ENCODE measurements at regions of chr14 and their contacts with region 1.

Region 1: GRCh38 chr14:31207755-31208545 is at the start of gene HECTD1:
- DNase-seq: peak; percentile 89
- H3K4me3 Mint-ChIP-seq: peak within 1 kb of the TSS; percentile 92
- H3K27ac Mint-ChIP-seq: peak within 1 kb of the TSS; percentile 100
- H3K4me1 Mint-ChIP-seq: peaks cover 34% of the 10 kb centered on the region
- H3K27me3 Mint-ChIP-seq: no peaks in the 10 kb centered on the region
- total RNA-seq, gene HECTD1: 61.5 to 64.1 TPM

Region 2: GRCh38 chr14:30621940-30622830 is 585.8 kb before region 1 on chr14 and contains the start of gene SCFD1:
- CTCF ChIA-PET with region 1: no interaction called
- intact Hi-C with region 1: loop called (anchors 1 kb)
- DNase-seq: peak; percentile 95
- H3K4me3 Mint-ChIP-seq: peak within 1 kb of the TSS; percentile 96
- H3K27ac Mint-ChIP-seq: peak within 1 kb of the TSS; percentile 94
- H3K4me1 Mint-ChIP-seq: peaks cover 35% of the 10 kb centered on the region
- H3K27me3 Mint-ChIP-seq: no peaks in the 10 kb centered on the region
- total RNA-seq, gene SCFD1: 46.1 to 55.2 TPM

Region 3: GRCh38 chr14:31026395-31027118 is 181.4 kb before region 1 on chr14:
- CTCF ChIA-PET with region 1: no interaction called
- intact Hi-C with region 1: loop called (anchors 1 kb)
- DNase-seq: peak; percentile 92
- H3K4me3 Mint-ChIP-seq: peak overlapping the region; percentile 96
- H3K27ac Mint-ChIP-seq: peak overlapping the region; percentile 96
- H3K4me1 Mint-ChIP-seq: peaks cover 55% of the 10 kb centered on the region
- H3K27me3 Mint-ChIP-seq: no peaks in the 10 kb centered on the region

Region 4: GRCh38 chr14:31270196-31270772 is 62.3 kb after region 1 on chr14:
- CTCF ChIA-PET with region 1: interaction called, 5 read pairs
- intact Hi-C with region 1: loop called (anchors 1 kb)
- DNase-seq: peak; percentile 33
- H3K4me3 Mint-ChIP-seq: no peak overlapping the region
- H3K27ac Mint-ChIP-seq: no peak overlapping the region
- H3K4me1 Mint-ChIP-seq: peaks cover 7% of the 10 kb centered on the region
- H3K27me3 Mint-ChIP-seq: no peaks in the 10 kb centered on the region

Region 5: DNA sequence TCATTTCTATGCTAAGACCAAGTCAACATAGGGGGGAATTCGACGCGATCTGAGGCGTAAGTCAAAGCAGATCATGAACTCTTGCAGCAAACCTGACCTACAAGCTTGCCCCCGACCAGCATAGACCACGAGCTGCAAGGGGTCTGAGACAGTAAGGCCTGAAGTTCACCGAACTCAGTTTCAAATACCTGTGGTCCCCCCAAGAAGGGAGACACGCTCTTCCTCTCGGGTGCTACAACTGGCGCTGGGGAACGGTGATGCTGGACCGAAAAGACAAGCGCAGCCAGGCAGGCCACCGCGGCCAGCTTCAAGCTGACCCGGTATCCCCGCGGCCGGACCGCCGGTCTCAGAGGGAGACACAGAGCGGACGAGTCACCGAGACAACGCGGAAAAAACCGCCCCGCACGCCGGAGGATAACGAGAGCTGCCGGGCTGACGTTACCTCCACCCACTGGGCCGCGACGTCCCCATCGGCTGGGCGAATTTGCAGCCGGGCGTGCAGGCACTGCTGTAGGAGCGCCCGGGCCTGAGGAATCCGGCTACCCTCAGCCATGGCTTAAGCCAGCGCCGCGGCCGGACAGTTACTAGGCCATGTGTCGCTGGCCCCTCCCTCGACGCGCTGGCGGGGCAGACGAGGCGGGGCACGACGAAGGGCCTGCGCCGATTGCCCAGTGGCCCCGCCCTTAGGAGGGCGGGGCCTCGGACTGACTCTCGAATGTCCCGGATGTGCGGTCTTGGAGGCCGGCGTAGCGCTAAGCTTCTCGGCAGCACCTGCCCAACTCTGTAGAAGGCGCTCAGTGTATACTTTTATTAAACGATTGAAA is 249.1 kb after region 1 on chr14 and contains the start of gene DTD2:
- CTCF ChIA-PET with region 1: no interaction called
- intact Hi-C with region 1: loop called (anchors 1 kb)
- DNase-seq: peak; percentile 93
- H3K4me3 Mint-ChIP-seq: peak within 1 kb of the TSS; percentile 94
- H3K27ac Mint-ChIP-seq: peak within 1 kb of the TSS; percentile 88
- H3K4me1 Mint-ChIP-seq: peaks cover 29% of the 10 kb centered on the region
- H3K27me3 Mint-ChIP-seq: no peaks in the 10 kb centered on the region
- total RNA-seq, gene DTD2: 12.9 to 13.3 TPM

Region 6: GRCh38 chr14:32102152-32102787 is 894.3 kb after region 1 on chr14:
- CTCF ChIA-PET with region 1: no interaction called
- intact Hi-C with region 1: loop called (anchors 5 kb)
- DNase-seq: peak; percentile 16
- H3K4me3 Mint-ChIP-seq: peak overlapping the region; percentile 5
- H3K27ac Mint-ChIP-seq: peak overlapping the region; percentile 71
- H3K4me1 Mint-ChIP-seq: peaks cover 40% of the 10 kb centered on the region
- H3K27me3 Mint-ChIP-seq: no peaks in the 10 kb centered on the region